AG04449 (cell line): ENCODE measurements at regions of chr18 and their contacts with region 1.

Region 1: DNA sequence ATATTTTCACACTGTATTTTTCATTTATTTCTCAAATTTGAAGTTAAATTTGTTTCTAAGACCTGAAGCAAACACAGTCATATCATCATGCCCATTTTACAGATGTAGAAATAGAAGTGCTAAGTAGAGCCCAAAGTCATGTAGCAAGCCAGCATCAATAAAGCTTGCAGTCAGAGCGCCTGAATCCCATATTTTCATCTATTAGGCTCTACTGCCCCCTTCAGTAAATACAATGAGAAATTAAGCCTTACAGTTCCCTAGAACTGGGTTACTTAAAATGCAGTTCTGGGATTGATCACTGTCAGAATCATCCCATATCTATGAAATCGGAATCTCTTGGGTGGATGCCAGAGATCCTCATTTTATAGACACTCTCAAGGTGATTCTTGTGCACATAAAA is 419.9 kb downstream of the TGIF1 start:
- DNase-seq: no peak
- H3K4me3 ChIP-seq: no peak overlapping the region
- CTCF ChIP-seq: peak; percentile 28

Region 2: DNA sequence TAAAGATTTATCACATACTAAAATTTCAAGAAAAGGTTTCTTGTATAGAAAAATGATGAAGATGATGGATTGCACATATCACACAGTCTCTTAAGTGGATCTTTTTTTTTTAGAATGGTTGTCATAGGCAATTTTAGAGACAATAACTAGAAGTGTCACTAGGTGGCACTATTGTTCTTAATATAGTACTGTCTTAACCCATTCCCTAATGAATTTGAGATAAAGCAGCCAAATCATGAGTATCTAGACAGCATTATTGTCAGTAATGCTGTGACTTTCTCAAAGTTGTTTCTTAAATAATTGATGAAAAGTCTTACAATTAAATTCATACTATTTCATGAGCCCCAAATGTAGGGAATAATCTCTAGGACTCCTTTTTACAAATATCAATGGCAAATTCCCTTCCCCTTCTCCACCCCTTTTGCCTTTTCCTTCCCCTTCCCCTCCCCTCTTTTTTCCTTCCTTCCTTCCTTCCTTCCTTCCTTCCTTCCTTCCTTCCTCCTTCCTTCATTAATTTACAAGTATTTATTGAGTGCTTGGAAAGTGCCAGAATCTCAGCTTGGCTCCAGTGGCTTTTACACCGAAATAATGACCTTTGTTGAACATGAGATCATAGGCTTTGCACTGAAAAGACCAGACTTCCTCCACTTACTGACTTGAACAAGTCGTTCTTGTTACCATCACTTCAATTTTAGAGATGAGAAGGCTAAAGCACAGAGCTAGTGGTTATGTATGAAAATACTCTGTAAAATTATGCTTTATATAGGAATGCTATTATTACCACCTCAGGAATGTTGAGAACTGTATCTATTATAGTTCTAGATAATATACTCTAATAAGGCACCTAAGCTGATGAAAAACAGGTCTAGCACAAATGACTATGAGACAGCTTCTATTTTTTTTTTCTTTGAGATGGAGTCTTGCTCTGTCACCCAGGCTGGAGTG is 588.1 kb before region 1 on chr18:
- CTCF ChIA-PET with region 1: interaction called, 13 read pairs
- POLR2A ChIA-PET with region 1: no interaction called
- DNase-seq: no peak
- H3K4me3 ChIP-seq: no peak overlapping the region
- CTCF ChIP-seq: peak; percentile 31

Region 3: GRCh38 chr18:3692113-3692621 is 177.7 kb before region 1 on chr18:
- CTCF ChIA-PET with region 1: interaction called, 10 read pairs
- POLR2A ChIA-PET with region 1: no interaction called
- DNase-seq: no peak
- H3K4me3 ChIP-seq: no peak overlapping the region
- CTCF ChIP-seq: no peak

Region 4: GRCh38 chr18:3777719-3778118 is 92.1 kb before region 1 on chr18:
- CTCF ChIA-PET with region 1: interaction called, 237 read pairs
- POLR2A ChIA-PET with region 1: no interaction called
- DNase-seq: no peak
- H3K4me3 ChIP-seq: no peak overlapping the region
- CTCF ChIP-seq: no peak

Region 5: DNA sequence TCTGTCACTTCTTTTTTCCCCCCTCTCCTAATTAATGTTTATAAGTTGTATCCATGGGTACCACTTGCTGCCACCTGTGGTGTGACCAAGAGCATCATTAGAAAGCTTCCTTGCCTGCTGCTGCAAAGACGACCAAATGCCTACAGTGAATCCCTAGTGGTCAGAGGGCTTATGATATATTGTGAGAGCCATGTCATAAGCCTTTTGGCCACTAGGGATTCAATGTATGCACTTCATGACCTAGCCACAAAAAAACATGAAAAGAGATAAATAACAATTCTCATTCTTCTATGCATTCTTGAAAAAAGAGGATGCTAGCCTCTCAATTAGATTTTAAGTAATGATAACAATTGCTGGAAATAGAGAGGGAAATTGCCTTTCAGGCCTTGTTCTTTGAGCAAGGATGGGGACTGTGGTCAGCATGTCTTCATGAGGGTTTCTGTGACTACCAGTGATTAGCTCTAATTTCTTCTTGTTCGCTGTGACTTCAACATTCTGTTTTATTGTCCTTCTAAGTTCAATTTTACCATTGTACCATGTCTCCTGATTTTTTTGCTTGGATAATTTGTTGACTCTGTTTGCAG is 15.5 kb after region 1 on chr18:
- CTCF ChIA-PET with region 1: interaction called, 14 read pairs
- POLR2A ChIA-PET with region 1: no interaction called
- DNase-seq: no peak
- H3K4me3 ChIP-seq: no peak overlapping the region
- CTCF ChIP-seq: peak; percentile 3

Region 6: GRCh38 chr18:3995476-3996102 is 125.7 kb after region 1 on chr18:
- CTCF ChIA-PET with region 1: interaction called, 28 read pairs
- POLR2A ChIA-PET with region 1: no interaction called
- DNase-seq: no peak
- H3K4me3 ChIP-seq: no peak overlapping the region
- CTCF ChIP-seq: peak; percentile 72